ENCODE measurements at regions of chr17 and their contacts with region 1.

Region 1: GRCh38 chr17:2282297-2282873 is 21.2 kb downstream of the SMG6 start:
- DNase-seq: no peak
- ATAC-seq: peak; percentile 65
- H3K4me3 ChIP-seq: no peak overlapping the region
- H3K27ac ChIP-seq: no peak overlapping the region
- H3K4me1 ChIP-seq: no peaks in the 10 kb centered on the region
- H3K27me3 ChIP-seq: no peaks in the 10 kb centered on the region
- CTCF ChIP-seq: peak; percentile 71

Region 2: GRCh38 chr17:2029911-2030778 is 252.2 kb before region 1 on chr17 and contains the start of gene DPH1:
- CTCF ChIA-PET with region 1: no interaction called
- POLR2A ChIA-PET with region 1: no interaction called
- in situ Hi-C with region 1: no loop called
- intact Hi-C with region 1: no loop called
- DNase-seq: no peak
- ATAC-seq: peak; percentile 87
- H3K4me3 ChIP-seq: peak within 1 kb of the TSS; percentile 89 to 97
- H3K27ac ChIP-seq: peak within 1 kb of the TSS; percentile 75
- H3K4me1 ChIP-seq: peaks cover 3% of the 10 kb centered on the region; the same call in 1 of the 2 replicates
- H3K27me3 ChIP-seq: no peaks in the 10 kb centered on the region
- CTCF ChIP-seq: no peak
- total RNA-seq, gene DPH1: 24.3 TPM

Region 3: DNA sequence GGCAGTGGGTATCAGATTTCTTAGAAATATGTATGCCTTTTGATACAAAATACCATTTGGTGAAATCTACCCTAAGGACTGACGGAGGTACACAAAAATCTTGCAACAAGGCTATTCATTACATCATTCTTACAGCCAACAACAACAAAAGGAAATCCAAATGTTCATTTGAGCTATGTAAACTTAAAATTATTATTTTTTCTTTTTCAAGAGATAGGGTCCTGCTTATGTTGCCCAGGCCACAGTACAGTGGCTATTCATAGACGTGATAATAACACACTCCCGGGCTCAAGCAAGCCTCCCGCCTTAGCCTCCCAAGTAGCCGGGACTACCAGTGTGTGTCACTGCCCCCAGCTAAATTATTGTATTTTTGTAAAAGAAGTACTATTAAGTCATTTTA is 30.4 kb after region 1 on chr17:
- CTCF ChIA-PET with region 1: interaction called, 12 read pairs
- POLR2A ChIA-PET with region 1: no interaction called
- in situ Hi-C with region 1: no loop called
- intact Hi-C with region 1: no loop called
- DNase-seq: no peak
- ATAC-seq: no peak
- H3K4me3 ChIP-seq: no peak overlapping the region
- H3K27ac ChIP-seq: no peak overlapping the region
- H3K4me1 ChIP-seq: no peaks in the 10 kb centered on the region
- H3K27me3 ChIP-seq: no peaks in the 10 kb centered on the region
- CTCF ChIP-seq: no peak

Region 4: GRCh38 chr17:2468270-2468669 is 185.9 kb after region 1 on chr17:
- CTCF ChIA-PET with region 1: no interaction called
- POLR2A ChIA-PET with region 1: no interaction called
- in situ Hi-C with region 1: no loop called
- intact Hi-C with region 1: no loop called
- DNase-seq: no peak
- ATAC-seq: no peak
- H3K4me3 ChIP-seq: no peak overlapping the region
- H3K27ac ChIP-seq: no peak overlapping the region
- H3K4me1 ChIP-seq: no peaks in the 10 kb centered on the region
- H3K27me3 ChIP-seq: no peaks in the 10 kb centered on the region
- CTCF ChIP-seq: no peak